ENCODE measurements at regions of chr2 and their contacts with region 1.

Region 1: DNA sequence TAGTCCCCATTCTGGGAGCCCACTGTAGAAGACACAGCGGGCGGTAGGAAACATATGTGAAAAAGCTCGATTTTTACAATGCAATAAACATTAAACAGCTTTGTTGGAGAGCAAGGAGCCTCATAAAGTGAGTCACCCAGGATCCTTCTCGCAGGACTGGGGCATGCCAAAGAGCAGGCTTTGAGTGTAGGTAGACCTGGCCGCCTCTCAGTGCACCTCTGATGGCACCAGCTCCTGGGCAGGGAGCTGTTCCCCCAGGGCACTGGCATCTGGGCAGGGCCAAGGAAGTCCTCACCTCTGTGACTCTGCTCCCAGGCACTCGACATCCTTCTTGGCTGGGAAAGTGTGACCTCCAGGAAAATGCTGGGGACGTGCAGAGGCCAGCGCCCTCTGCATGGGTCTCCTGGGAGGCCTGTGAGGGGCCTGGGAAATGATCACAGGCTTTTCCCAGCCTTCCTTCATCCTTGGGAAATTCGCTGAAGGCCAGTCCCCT is 94.2 kb downstream of the POLR1A start:
- DNase-seq: no peak
- H3K4me3 ChIP-seq: no peak overlapping the region
- H3K27ac ChIP-seq: no peak overlapping the region
- H3K4me1 ChIP-seq: no peaks in the 10 kb centered on the region
- H3K27me3 ChIP-seq: no peaks in the 10 kb centered on the region
- CTCF ChIP-seq: no peak

Region 2: DNA sequence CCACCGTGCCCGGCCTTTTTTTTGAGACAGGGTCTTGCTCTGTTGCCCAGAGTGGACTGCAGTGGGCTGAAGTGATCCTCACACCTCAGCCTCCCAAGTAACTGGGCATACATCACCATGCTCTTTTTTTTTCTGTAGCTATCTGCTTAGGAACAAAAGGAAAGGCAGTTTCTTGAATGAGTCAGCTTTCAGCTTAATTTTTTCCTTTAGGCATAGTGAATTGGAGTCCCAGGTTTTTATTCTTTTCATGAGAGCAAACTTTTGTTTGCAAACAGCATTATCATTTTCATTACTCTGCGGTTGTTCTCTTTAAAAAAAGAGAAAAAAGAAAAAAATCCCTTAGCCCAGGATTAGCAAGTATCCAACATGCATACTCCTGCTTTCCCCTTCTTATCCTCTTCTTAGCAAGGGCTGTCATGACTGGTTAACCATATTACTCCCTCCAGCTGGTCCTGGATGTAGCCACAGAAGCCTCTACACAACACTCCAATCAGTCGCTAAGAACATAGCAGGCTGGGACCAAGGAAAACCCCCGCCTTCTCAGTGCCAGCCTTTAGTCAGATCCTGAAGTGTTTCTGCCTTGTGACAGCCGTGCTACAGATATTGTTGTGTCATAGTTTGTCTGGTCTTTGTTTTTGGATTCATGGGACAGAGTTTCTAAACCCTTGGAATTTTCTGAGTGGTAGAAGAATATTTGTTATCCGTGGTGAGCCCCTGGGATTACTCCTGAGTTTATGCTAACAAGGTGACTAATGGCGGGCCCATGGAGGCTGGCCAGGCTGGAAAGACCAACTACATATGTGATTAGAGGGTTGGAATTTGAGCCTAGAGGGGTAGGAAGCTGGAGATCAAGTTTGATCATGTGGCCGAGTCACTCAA is 99.4 kb before region 1 on chr2:
- CTCF ChIA-PET with region 1: no interaction called
- dilution Hi-C with region 1: no loop called
- in situ Hi-C with region 1: no loop called
- intact Hi-C with region 1: no loop called
- DNase-seq: peak; percentile 94
- H3K4me3 ChIP-seq: no peak overlapping the region
- H3K27ac ChIP-seq: peak overlapping the region; percentile 94
- H3K4me1 ChIP-seq: peaks cover 33% of the 10 kb centered on the region
- H3K27me3 ChIP-seq: no peaks in the 10 kb centered on the region
- CTCF ChIP-seq: no peak

Region 3: GRCh38 chr2:85942346-85942957 is 69.0 kb before region 1 on chr2:
- CTCF ChIA-PET with region 1: no interaction called
- dilution Hi-C with region 1: loop called (anchors 5 kb)
- in situ Hi-C with region 1: no loop called
- intact Hi-C with region 1: no loop called
- DNase-seq: no peak
- H3K4me3 ChIP-seq: no peak overlapping the region
- H3K27ac ChIP-seq: no peak overlapping the region
- H3K4me1 ChIP-seq: no peaks in the 10 kb centered on the region
- H3K27me3 ChIP-seq: no peaks in the 10 kb centered on the region
- CTCF ChIP-seq: no peak

Region 4: DNA sequence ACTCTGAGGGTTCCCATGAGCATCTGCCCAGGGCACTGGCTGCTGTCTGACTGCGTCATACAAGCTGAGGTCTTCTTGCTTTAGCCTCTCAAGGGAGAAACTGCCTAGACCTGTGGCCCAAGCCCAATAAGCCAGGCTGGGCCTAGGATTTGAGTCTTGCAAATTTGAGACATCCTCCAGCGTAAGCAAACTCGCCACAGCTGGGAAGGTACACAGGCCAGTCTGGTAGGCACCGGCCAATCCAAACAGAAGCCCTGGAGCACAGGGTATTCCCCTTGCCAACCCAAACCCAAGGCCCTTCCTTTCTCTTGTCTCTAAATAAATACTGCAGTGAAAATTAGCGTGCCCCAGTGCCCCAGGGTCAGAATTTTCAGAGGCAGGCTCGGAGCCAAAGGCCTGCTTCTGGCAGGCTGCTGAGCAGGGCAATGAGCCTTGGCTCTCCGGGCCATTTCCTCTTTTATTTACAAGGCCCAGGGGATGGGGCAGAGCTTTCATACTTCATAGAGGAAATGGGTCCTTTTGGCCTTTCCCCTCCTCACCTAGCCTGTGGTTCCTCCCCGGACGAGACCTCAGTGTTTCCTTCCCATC is 60.9 kb after region 1 on chr2:
- CTCF ChIA-PET with region 1: no interaction called
- dilution Hi-C with region 1: no loop called
- in situ Hi-C with region 1: no loop called
- intact Hi-C with region 1: no loop called
- DNase-seq: no peak
- H3K4me3 ChIP-seq: no peak overlapping the region
- H3K27ac ChIP-seq: no peak overlapping the region
- H3K4me1 ChIP-seq: no peaks in the 10 kb centered on the region
- H3K27me3 ChIP-seq: no peaks in the 10 kb centered on the region
- CTCF ChIP-seq: no peak